Activated naive CD8-positive, alpha-beta T cell treated with anti-CD3 and anti-CD28 coated beads, Interleukin-2, amount 10 ng/mL, durations not matched to agents 7 days and 5 days (primary cell): ENCODE measurements at regions of chr3 and their contacts with region 1.

Region 1: GRCh38 chr3:129120254-129121004 is 1.2 kb downstream of the RAB43 start:
- DNase-seq: peak; percentile 88
- ATAC-seq: peak; percentile 63
- H3K4me3 Mint-ChIP-seq: peak overlapping the region; percentile 93
- H3K27ac Mint-ChIP-seq: peak overlapping the region; percentile 98
- H3K4me1 Mint-ChIP-seq: peaks cover 40% of the 10 kb centered on the region
- H3K27me3 Mint-ChIP-seq: no peaks in the 10 kb centered on the region

Region 2: DNA sequence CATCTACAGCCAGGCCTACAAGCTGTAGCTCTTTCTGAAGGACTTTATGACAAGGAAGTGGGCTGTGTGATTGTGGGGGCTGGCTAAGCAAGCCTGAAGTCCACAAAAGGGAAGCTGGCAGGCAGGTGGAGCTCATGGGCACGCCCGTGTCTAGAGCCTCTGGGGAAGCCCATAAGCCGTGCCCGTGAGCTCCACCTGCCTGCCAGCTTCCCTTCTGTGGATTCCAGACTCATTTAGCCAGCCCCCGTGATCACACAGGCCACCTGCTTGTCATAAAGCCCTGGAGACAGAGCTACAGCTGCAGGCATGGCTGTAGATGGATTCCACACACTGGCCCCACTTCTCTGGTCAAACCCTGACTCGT is 104.1 kb before region 1 on chr3:
- POLR2A ChIA-PET with region 1: interaction called, 54 read pairs
- DNase-seq: peak; percentile 68
- ATAC-seq: peak; percentile 91
- H3K4me3 Mint-ChIP-seq: peak overlapping the region; percentile 61
- H3K27ac Mint-ChIP-seq: peak overlapping the region; percentile 90
- H3K4me1 Mint-ChIP-seq: peaks cover 29% of the 10 kb centered on the region
- H3K27me3 Mint-ChIP-seq: no peaks in the 10 kb centered on the region

Region 3: GRCh38 chr3:129052675-129053074 is 67.8 kb before region 1 on chr3:
- POLR2A ChIA-PET with region 1: interaction called, 50 read pairs
- DNase-seq: no peak
- ATAC-seq: no peak
- H3K4me3 Mint-ChIP-seq: no peak overlapping the region
- H3K27ac Mint-ChIP-seq: no peak overlapping the region
- H3K4me1 Mint-ChIP-seq: peaks cover 6% of the 10 kb centered on the region
- H3K27me3 Mint-ChIP-seq: peaks cover 6% of the 10 kb centered on the region

Region 4: GRCh38 chr3:129101370-129102138 is 18.9 kb before region 1 on chr3:
- POLR2A ChIA-PET with region 1: interaction called, 112 read pairs
- DNase-seq: no peak
- ATAC-seq: no peak
- H3K4me3 Mint-ChIP-seq: no peak overlapping the region
- H3K27ac Mint-ChIP-seq: peak overlapping the region; percentile 64
- H3K4me1 Mint-ChIP-seq: peaks cover 45% of the 10 kb centered on the region
- H3K27me3 Mint-ChIP-seq: no peaks in the 10 kb centered on the region

Region 5: GRCh38 chr3:129183569-129184395 is 63.4 kb after region 1 on chr3 and contains the start of gene CNBP:
- POLR2A ChIA-PET with region 1: interaction called, 28 read pairs
- DNase-seq: peak; percentile 97
- ATAC-seq: peak; percentile 98
- H3K4me3 Mint-ChIP-seq: peak within 1 kb of the TSS; percentile 92
- H3K27ac Mint-ChIP-seq: peak within 1 kb of the TSS; percentile 98
- H3K4me1 Mint-ChIP-seq: peaks cover 38% of the 10 kb centered on the region
- H3K27me3 Mint-ChIP-seq: no peaks in the 10 kb centered on the region
- total RNA-seq, gene CNBP: 309 to 312 TPM

Region 6: GRCh38 chr3:129249276-129250065 is 129.0 kb after region 1 on chr3 and contains the start of gene COPG1:
- POLR2A ChIA-PET with region 1: interaction called, 21 read pairs
- DNase-seq: peak; percentile 94
- ATAC-seq: peak; percentile 92
- H3K4me3 Mint-ChIP-seq: peak within 1 kb of the TSS; percentile 99
- H3K27ac Mint-ChIP-seq: peak within 1 kb of the TSS; percentile 98
- H3K4me1 Mint-ChIP-seq: peaks cover 42% of the 10 kb centered on the region
- H3K27me3 Mint-ChIP-seq: no peaks in the 10 kb centered on the region
- total RNA-seq, gene COPG1: 131 to 138 TPM

Region 7: GRCh38 chr3:129316131-129317013 is 195.9 kb after region 1 on chr3:
- POLR2A ChIA-PET with region 1: interaction called, 45 read pairs
- DNase-seq: peak; percentile 93
- ATAC-seq: peak; percentile 41
- H3K4me3 Mint-ChIP-seq: peak overlapping the region; percentile 81
- H3K27ac Mint-ChIP-seq: peak overlapping the region; percentile 65
- H3K4me1 Mint-ChIP-seq: peaks cover 29% of the 10 kb centered on the region
- H3K27me3 Mint-ChIP-seq: no peaks in the 10 kb centered on the region